CD4-positive, alpha-beta memory T cell (primary cell): ENCODE measurements at regions of chr1 and their contacts with region 1.

Region 1: DNA sequence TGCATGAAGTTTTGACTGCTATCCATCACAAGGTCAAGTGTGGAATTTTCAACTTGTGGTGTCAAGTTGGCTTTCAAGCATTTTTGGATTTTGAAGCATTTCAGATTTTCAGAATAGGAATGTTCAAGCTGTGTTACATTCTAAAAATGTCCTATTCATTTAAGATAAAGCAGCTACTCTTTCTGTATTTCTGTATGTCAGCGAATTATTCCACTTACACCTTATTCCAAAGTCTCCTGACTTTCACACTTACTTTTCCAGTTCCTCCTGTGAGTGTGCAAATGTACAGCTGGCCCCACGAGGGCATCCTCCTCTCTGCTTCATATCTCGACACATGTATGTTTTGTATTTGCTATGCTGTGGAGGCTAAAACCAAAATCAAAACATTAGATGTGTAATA is 51.9 kb downstream of the RC3H1 start:
- DNase-seq: no peak
- H3K4me3 ChIP-seq: no peak overlapping the region
- H3K4me3 Mint-ChIP-seq: no peak overlapping the region
- H3K27ac ChIP-seq: no peak overlapping the region
- H3K27ac Mint-ChIP-seq: peak overlapping the region in 2 of 7 donors; percentile 29 to 42
- H3K4me1 ChIP-seq: no peaks in the 10 kb centered on the region
- H3K4me1 Mint-ChIP-seq: peaks cover 0 to 6% (median 3%) of the 10 kb centered on the region in 4 donors
- H3K27me3 ChIP-seq: no peaks in the 10 kb centered on the region
- H3K27me3 Mint-ChIP-seq: no peaks in the 10 kb centered on the region

Region 2: GRCh38 chr1:174080819-174081218 is 110.6 kb after region 1 on chr1:
- CTCF ChIA-PET with region 1: no interaction called
- POLR2A ChIA-PET with region 1: no interaction called
- intact Hi-C with region 1: loop called (anchors 10 kb)
- DNase-seq: no peak
- H3K4me3 ChIP-seq: no peak overlapping the region
- H3K4me3 Mint-ChIP-seq: no peak overlapping the region
- H3K27ac ChIP-seq: no peak overlapping the region
- H3K27ac Mint-ChIP-seq: no peak overlapping the region
- H3K4me1 ChIP-seq: no peaks in the 10 kb centered on the region
- H3K4me1 Mint-ChIP-seq: no peaks in the 10 kb centered on the region
- H3K27me3 ChIP-seq: no peaks in the 10 kb centered on the region
- H3K27me3 Mint-ChIP-seq: no peaks in the 10 kb centered on the region